Endothelial cell of umbilical vein (primary cell): ENCODE measurements at regions of chr1 and their contacts with region 1.

Region 1: DNA sequence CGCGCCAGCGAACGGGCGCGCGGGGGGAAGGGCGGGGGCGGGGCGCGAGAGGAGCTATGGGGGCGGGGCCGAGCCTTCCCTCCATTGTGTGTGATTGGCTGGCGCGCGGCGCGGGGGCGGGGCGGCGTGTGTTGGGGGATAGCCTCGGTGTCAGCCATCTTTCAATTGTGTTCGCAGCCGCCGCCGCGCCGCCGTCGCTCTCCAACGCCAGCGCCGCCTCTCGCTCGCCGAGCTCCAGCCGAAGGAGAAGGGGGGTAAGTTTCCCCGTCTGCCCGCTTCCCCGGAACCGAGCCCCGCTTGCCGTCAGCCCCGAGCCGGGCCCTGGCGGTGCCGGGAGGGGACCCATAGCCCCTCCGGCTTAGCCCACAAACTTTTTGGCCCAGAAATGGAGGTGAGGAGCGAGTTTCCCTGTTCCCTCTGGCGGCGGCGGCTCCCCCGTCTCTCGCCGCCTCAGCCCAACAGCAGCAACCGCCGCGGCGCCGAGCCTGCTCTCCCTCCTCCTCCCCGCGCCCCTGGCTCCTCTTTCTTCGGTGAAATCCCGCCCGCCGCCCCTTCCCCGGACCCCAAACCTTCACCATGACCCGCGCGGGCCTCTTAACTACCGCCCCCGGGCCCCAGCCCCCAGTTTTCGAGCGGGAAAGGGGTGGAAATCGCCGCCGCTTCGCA is at the start of gene H3-3A:
- DNase-seq: peak; percentile 94
- H3K4me3 ChIP-seq: peak within 1 kb of the TSS; percentile 68 to 99 (median 90)
- H3K27ac ChIP-seq: peak within 1 kb of the TSS; percentile 95
- H3K4me1 ChIP-seq: peaks cover 24% of the 10 kb centered on the region
- H3K27me3 ChIP-seq: no peaks in the 10 kb centered on the region
- CTCF ChIP-seq: no peak
- POLR2A ChIP-seq: peak; percentile 95
- total RNA-seq, gene H3-3A: 448 and 477 TPM in 2 replicates

Region 2: GRCh38 chr1:225428068-225428880 is 634.4 kb before region 1 on chr1:
- CTCF ChIA-PET with region 1: no interaction called
- POLR2A ChIA-PET with region 1: no interaction called
- dilution Hi-C with region 1: no loop called
- intact Hi-C with region 1: loop called (anchors 5 kb)
- DNase-seq: peak; percentile 90
- H3K4me3 ChIP-seq: peak overlapping the region; percentile 37 to 79 (median 68)
- H3K27ac ChIP-seq: peak overlapping the region; percentile 75
- H3K4me1 ChIP-seq: peaks cover 39% of the 10 kb centered on the region
- H3K27me3 ChIP-seq: peaks cover 0 to 1% of the 10 kb centered on the region in 2 experiments
- CTCF ChIP-seq: no peak
- POLR2A ChIP-seq: peak; percentile 23

Region 3: GRCh38 chr1:225987491-225988316 is 75.0 kb before region 1 on chr1:
- CTCF ChIA-PET with region 1: interaction called, 61 read pairs
- POLR2A ChIA-PET with region 1: interaction called, 4 read pairs
- dilution Hi-C with region 1: no loop called
- intact Hi-C with region 1: no loop called
- DNase-seq: peak; percentile 58
- H3K4me3 ChIP-seq: no peak overlapping the region
- H3K27ac ChIP-seq: no peak overlapping the region
- H3K4me1 ChIP-seq: no peaks in the 10 kb centered on the region
- H3K27me3 ChIP-seq: no peaks in the 10 kb centered on the region
- CTCF ChIP-seq: peak; percentile 36 to 57
- POLR2A ChIP-seq: no peak

Region 4: GRCh38 chr1:226034482-226034881 is 28.2 kb before region 1 on chr1:
- CTCF ChIA-PET with region 1: interaction called, 10 read pairs
- POLR2A ChIA-PET with region 1: interaction called, 7 read pairs
- dilution Hi-C with region 1: no loop called
- intact Hi-C with region 1: loop called (anchors 1 kb)
- DNase-seq: peak; percentile 89
- H3K4me3 ChIP-seq: no peak overlapping the region
- H3K27ac ChIP-seq: no peak overlapping the region
- H3K4me1 ChIP-seq: peaks cover 3% of the 10 kb centered on the region
- H3K27me3 ChIP-seq: no peaks in the 10 kb centered on the region
- CTCF ChIP-seq: no peak
- POLR2A ChIP-seq: no peak

Region 5: DNA sequence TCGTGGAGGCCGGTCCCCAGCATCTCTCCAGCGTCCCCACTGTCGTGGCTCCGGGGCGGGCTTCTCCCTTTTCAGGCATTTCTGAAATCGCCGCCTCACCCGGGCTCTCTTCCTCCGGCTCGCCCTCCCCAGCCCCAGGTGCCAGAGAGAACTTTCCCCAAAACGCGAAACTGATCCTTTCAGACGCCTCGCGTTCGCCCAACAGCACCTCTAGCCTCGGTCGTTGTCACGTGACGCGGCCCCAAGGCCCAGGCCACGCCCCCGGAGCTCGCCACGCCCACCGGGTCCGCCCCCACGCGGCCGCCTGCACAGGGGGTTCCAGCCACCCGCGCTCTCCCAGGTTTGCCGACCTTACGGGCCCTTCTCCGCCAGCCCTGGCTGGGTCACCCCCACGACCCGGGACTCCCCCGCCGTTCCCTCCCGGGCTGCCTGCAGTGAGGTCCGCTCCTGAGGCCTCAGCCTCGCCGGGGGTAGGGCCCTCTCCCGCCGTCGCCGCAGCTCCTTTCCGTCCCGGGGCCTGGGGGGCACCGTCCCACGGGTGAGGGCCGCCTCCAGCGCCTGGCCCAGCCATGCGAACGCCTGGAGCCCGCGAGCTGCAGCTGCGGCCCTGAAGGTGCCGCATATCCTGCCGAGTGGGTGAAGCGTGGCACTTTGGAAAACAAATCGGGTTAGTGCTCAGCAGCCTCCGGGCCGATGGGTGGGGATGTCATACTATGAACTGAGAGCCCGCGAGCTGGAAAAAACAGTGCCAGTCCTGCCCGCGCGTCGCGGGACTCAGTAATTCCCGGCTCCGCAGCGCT is 20.8 kb after region 1 on chr1:
- CTCF ChIA-PET with region 1: interaction called, 80 read pairs
- POLR2A ChIA-PET with region 1: interaction called, 9 read pairs
- dilution Hi-C with region 1: no loop called
- intact Hi-C with region 1: loop called (anchors 2 kb)
- DNase-seq: peak; percentile 78
- H3K4me3 ChIP-seq: peak overlapping the region; percentile 58 to 87 (median 69)
- H3K27ac ChIP-seq: peak overlapping the region; percentile 20
- H3K4me1 ChIP-seq: peaks cover 5% of the 10 kb centered on the region
- H3K27me3 ChIP-seq: no peaks in the 10 kb centered on the region
- CTCF ChIP-seq: no peak
- POLR2A ChIP-seq: peak; percentile 53

Region 6: DNA sequence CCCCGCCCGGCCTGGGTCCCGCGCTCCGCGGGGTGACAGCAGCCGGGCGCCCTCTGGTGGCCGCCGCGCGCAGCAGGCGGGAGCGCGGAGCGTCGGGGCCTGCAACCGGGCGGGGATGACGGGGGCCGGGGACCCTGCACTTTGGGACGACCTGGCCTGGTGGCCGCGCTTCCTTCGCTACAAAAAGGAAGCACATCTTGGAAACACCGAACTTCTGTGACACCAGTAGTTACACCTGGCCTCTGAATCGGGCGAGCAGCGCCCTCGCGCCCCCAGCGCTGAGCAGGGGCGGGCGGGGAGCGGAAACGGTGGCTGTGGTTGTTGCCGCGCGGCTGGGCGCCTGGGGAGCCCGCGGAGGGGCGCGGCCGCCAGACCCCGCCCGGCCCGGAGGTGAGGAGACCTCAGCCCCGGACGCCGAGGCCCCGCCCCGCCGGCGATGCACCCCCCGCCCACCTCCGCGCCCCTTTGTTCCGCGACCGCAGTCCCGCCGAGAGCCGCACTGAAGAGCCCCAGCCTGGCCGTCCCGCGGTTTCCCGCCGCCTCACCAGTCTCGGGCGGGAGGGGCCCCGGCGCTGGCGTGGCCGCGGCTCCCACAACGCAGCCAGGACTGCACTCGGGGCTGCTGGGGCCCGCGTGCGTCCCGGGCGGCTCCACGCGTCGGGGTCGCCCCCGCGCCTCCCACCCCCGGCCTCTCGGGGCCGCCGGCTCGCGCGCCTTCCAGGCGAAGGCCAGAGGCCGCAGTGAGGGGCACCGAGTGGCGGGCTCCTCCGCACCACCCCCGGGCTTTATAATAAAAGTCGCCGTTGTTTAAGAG is 59.1 kb after region 1 on chr1:
- CTCF ChIA-PET with region 1: interaction called, 139 read pairs
- POLR2A ChIA-PET with region 1: interaction called, 5 read pairs
- dilution Hi-C with region 1: no loop called
- intact Hi-C with region 1: loop called (anchors 1 kb)
- DNase-seq: peak; percentile 43
- H3K4me3 ChIP-seq: peak overlapping the region; percentile 22 to 58 (median 49)
- H3K27ac ChIP-seq: no peak overlapping the region
- H3K4me1 ChIP-seq: no peaks in the 10 kb centered on the region
- H3K27me3 ChIP-seq: peaks cover 0 to 2% of the 10 kb centered on the region in 2 experiments
- CTCF ChIP-seq: peak; percentile 68 to 82
- POLR2A ChIP-seq: no peak

Region 7: GRCh38 chr1:226209307-226210059 is 146.8 kb after region 1 on chr1:
- CTCF ChIA-PET with region 1: no interaction called
- POLR2A ChIA-PET with region 1: no interaction called
- dilution Hi-C with region 1: no loop called
- intact Hi-C with region 1: no loop called
- DNase-seq: no peak
- H3K4me3 ChIP-seq: no peak overlapping the region
- H3K27ac ChIP-seq: no peak overlapping the region
- H3K4me1 ChIP-seq: no peaks in the 10 kb centered on the region
- H3K27me3 ChIP-seq: no peaks in the 10 kb centered on the region
- CTCF ChIP-seq: no peak
- POLR2A ChIP-seq: no peak

Region 8: GRCh38 chr1:226308723-226309315 is 246.1 kb after region 1 on chr1 and contains the start of gene LIN9:
- CTCF ChIA-PET with region 1: interaction called, 10 read pairs
- POLR2A ChIA-PET with region 1: interaction called, 4 read pairs
- dilution Hi-C with region 1: no loop called
- intact Hi-C with region 1: no loop called
- DNase-seq: peak; percentile 91
- H3K4me3 ChIP-seq: peak within 1 kb of the TSS; percentile 81 to 98 (median 85)
- H3K27ac ChIP-seq: peak within 1 kb of the TSS; percentile 75
- H3K4me1 ChIP-seq: peaks cover 13% of the 10 kb centered on the region
- H3K27me3 ChIP-seq: peaks cover 2 to 4% of the 10 kb centered on the region in 2 experiments
- CTCF ChIP-seq: peak in 1 of 2 donors; percentile 5
- POLR2A ChIP-seq: peak; percentile 54
- total RNA-seq, gene LIN9: 7.6 and 9.4 TPM in 2 replicates